Ascending aorta (tissue), 2 donors: ENCODE measurements at regions of chr5 and their contacts with region 1.

Region 1: GRCh38 chr5:171907725-171908343 is 98.6 kb downstream of the FBXW11 start:
- DNase-seq: no peak
- H3K4me3 ChIP-seq: no peak overlapping the region
- H3K27ac ChIP-seq: no peak overlapping the region
- H3K4me1 ChIP-seq: peaks cover 0 to 5% of the 10 kb centered on the region in 2 donors
- H3K27me3 ChIP-seq: no peaks in the 10 kb centered on the region
- CTCF ChIP-seq: peak; percentile 69 to 79 (median 73)

Region 2: DNA sequence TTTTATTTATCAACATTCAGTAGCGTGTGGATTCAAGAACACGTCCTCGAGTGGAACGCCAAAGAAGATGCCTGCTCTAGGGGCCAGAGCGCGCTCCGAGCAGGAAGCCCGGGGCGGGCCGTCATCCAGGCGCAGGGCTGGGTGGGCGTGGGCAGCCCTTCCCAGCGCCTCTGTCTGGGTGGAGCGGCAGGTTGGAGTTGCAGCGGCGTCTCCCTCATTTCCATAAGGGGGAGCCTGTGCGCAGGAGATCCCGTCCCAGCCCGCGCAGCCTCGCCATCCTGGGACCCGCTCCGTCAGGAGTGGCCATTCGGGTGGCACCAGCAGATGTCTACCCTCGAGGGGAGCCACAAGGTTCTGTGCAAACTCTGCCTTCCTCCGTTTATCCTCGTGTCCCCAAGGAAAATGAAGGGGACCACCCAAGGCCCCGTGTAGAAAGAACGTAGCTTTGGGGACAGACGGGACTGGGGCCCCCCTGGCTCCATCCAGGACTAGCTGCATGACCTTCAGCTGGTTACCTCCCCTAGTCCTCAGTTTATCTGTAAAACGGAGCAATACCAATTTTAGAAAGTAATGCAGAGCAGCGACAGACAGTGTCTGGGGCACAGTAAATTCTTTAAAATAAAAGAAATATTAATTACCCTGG is 277.7 kb before region 1 on chr5:
- intact Hi-C with region 1: loop called (anchors 5 kb)
- DNase-seq: peak in 1 of 2 donors; percentile 64
- H3K4me3 ChIP-seq: peak overlapping the region in 1 of 2 donors; percentile 25
- H3K27ac ChIP-seq: no peak overlapping the region
- H3K4me1 ChIP-seq: peaks cover 0 to 5% of the 10 kb centered on the region in 2 donors
- H3K27me3 ChIP-seq: no peaks in the 10 kb centered on the region
- CTCF ChIP-seq: peak; percentile 18 to 60 (median 37)

Region 3: DNA sequence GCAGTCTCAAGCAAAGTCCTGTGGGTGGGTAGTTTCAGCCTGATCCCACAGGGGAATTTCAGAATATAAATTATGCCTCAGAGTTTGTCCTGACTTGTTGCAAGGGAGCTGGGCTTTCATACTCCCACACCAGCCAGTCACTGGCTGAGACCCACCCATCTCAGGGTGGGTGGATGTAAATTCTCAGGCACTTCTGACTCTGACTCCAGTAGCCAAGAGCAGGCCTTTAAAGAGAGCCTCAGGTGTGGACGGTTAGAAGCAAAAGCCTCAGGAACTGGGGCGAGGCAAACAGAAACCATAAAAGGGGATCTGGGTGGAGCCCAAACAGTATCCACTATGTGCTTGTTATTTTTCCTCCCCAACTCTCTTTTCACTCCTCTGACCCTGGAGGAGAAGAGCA is 127.2 kb after region 1 on chr5:
- intact Hi-C with region 1: loop called (anchors 1 kb)
- DNase-seq: no peak
- H3K4me3 ChIP-seq: no peak overlapping the region
- H3K27ac ChIP-seq: no peak overlapping the region
- H3K4me1 ChIP-seq: no peaks in the 10 kb centered on the region
- H3K27me3 ChIP-seq: no peaks in the 10 kb centered on the region
- CTCF ChIP-seq: no peak